ENCODE measurements at regions of chr4 and their contacts with region 1.

Region 1: DNA sequence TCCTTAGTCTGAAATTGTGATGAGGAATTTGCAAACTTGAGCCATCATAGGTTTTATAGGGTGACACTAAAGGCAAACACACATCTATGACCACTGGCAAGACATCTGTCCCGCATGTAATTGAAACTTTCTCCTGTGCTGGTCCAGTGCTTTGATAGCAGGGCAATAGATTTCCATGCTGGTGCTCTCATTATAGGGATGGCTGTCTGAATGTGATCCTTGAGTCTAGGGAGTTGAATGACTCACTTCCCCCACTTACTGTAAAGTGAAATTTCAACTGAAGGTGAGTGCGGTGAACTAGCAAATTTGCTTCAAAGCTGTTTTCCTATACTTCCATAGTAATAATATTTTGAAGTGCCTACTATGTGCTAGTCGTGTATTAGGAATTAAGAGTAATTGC is 1630.0 kb downstream of the STIM2 start:
- DNase-seq: no peak
- ATAC-seq: no peak
- H3K4me3 ChIP-seq: no peak overlapping the region
- H3K27ac ChIP-seq: no peak overlapping the region
- H3K4me1 ChIP-seq: no peaks in the 10 kb centered on the region
- H3K27me3 ChIP-seq: no peaks in the 10 kb centered on the region
- CTCF ChIP-seq: no peak

Region 2: GRCh38 chr4:28010577-28011240 is 480.0 kb before region 1 on chr4:
- intact Hi-C with region 1: no loop called
- DNase-seq: no peak
- ATAC-seq: no peak
- H3K4me3 ChIP-seq: no peak overlapping the region
- H3K27ac ChIP-seq: no peak overlapping the region
- H3K4me1 ChIP-seq: no peaks in the 10 kb centered on the region
- H3K27me3 ChIP-seq: no peaks in the 10 kb centered on the region
- CTCF ChIP-seq: no peak

Region 3: DNA sequence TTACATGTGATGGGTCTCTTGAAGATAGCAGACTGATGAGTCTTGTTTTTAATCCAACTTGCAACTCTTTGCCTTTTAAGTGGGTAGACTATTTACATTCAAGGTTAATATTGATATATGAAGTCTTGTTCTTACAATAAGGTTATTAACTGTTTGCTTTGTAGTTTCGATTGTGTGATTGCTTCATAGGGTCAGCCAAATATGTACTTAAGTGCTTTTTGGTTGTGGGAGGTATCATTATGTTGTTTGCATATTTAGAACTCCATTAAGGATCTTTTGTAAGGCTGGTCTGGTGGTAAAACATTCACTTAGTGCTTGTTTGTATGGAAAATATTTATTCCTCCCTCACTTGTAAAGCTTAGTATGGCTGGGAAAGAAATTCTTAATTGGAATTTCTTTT is 238.1 kb after region 1 on chr4:
- intact Hi-C with region 1: loop called in 1 of 3 experiments (anchors 5 kb)
- DNase-seq: no peak
- ATAC-seq: no peak
- H3K4me3 ChIP-seq: no peak overlapping the region
- H3K27ac ChIP-seq: no peak overlapping the region
- H3K4me1 ChIP-seq: no peaks in the 10 kb centered on the region
- H3K27me3 ChIP-seq: no peaks in the 10 kb centered on the region
- CTCF ChIP-seq: no peak